PC-9 (cell line): ENCODE measurements at regions of chr16 and their contacts with region 1.

Region 1: GRCh38 chr16:67428146-67428731 is 2.7 kb upstream of the HSD11B2 start:
- DNase-seq: peak; percentile 59 to 74
- H3K4me3 ChIP-seq: no peak overlapping the region
- H3K27ac ChIP-seq: no peak overlapping the region
- H3K4me1 ChIP-seq: no peaks in the 10 kb centered on the region; the same call in none of the 2 replicates
- H3K27me3 ChIP-seq: no peaks in the 10 kb centered on the region
- CTCF ChIP-seq: peak; percentile 79

Region 2: GRCh38 chr16:66970775-66971725 is 457.2 kb before region 1 on chr16:
- CTCF ChIA-PET with region 1: no interaction called
- POLR2A ChIA-PET with region 1: interaction called, 10 read pairs
- intact Hi-C with region 1: no loop called
- DNase-seq: peak; percentile 63 to 67
- H3K4me3 ChIP-seq: no peak overlapping the region
- H3K27ac ChIP-seq: no peak overlapping the region
- H3K4me1 ChIP-seq: peaks cover 17% of the 10 kb centered on the region
- H3K27me3 ChIP-seq: no peaks in the 10 kb centered on the region
- CTCF ChIP-seq: no peak

Region 3: GRCh38 chr16:67137605-67138004 is 290.6 kb before region 1 on chr16:
- CTCF ChIA-PET with region 1: no interaction called
- POLR2A ChIA-PET with region 1: no interaction called
- intact Hi-C with region 1: no loop called
- DNase-seq: no peak
- H3K4me3 ChIP-seq: no peak overlapping the region
- H3K27ac ChIP-seq: no peak overlapping the region
- H3K4me1 ChIP-seq: no peaks in the 10 kb centered on the region
- H3K27me3 ChIP-seq: no peaks in the 10 kb centered on the region
- CTCF ChIP-seq: no peak

Region 4: DNA sequence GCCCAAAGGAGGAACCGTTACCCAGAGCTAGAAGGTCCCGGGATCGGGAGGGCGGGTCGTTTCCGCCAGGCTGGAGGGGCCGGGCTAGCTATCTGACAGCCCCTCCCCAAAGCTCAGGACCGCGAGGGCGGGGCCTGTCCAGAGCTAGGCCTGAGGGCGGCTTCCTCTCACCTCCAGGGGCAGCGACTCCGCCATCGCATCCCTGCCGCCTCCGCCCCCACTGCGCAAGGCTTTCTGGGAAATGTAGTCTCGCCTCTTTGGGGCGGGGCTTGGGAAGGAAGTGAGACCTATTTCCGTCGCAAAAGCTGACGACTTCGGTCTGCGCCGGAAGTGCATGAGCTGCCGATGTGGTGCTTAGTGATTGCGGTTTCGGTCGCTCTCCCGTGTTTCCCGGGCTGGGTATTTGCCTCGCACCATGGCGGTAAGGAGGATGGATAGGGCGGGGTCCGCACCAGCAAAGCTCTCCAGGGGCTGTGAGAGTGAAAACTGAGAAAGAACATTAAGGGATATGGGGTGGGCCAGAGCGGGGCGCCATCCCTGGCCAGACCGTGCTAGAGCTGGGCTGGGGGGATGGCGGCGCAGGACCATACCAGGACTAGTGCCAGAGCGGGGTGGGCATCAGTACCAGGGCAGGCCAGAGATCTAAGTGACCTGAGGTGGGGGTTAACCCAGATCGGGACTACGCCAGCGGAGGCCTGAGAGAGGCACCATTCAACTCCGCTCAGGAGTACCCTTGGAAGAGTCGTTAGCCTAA is 201.3 kb before region 1 on chr16 and contains the start of gene TMEM208:
- CTCF ChIA-PET with region 1: interaction called, 29 read pairs
- POLR2A ChIA-PET with region 1: no interaction called
- intact Hi-C with region 1: no loop called
- DNase-seq: peak; percentile 93 to 98
- H3K4me3 ChIP-seq: peak within 1 kb of the TSS; percentile 91
- H3K27ac ChIP-seq: peak within 1 kb of the TSS; percentile 20; the same call in 1 of the 2 replicates
- H3K4me1 ChIP-seq: peaks cover 15% of the 10 kb centered on the region
- H3K27me3 ChIP-seq: no peaks in the 10 kb centered on the region
- CTCF ChIP-seq: no peak; the same call in 1 of the 2 replicates
- total RNA-seq, gene TMEM208: 39.5 and 42.0 TPM in 2 replicates

Region 5: DNA sequence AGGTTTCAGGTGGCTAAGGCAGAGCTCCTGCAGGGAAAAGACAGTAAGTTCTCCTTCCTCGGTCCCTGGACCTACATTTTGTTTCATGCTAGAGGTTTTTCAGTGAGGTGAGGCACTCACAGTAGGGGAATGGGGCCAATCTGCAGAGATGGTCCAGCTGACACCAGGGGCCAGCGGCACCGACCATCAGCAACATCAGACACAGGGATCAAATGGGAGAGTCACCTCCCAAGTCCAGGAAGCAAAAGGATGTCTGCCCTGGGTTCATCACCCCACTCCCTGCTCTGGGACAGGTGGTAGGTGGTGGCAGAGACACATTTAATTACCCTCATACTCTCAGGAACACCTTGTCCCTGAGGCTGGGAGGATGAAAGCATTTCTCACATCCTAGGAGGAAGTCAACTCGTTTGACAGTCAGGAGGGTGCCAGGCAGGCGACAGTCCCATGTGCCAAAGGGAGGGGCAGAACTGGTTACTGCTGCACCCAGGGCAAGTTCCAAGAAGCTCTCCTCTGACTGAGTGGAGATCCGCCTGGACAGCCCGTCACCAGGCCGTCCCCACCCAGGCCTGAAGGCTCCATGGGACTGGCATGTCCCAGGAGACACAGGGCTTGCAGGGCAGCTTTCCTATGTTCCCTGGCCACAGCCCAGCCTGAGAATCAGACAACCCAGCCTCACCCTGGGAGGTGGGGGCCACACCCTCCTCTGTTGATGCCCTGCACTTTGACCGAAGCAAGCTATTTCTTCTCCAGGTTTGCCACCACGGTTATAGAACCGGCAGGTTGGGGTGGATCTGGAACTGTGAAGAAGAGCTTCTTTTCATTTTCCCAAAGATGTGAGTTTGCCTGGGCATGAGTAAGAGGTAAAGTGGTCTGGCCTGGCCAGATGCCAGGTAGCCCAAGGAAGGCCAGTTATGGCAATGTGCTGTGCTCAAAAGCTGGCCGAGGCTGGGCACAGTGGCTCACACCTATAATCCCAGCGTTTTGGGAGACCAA is 33.7 kb after region 1 on chr16:
- CTCF ChIA-PET with region 1: interaction called, 13 read pairs
- POLR2A ChIA-PET with region 1: no interaction called
- intact Hi-C with region 1: loop called (anchors 1 kb)
- DNase-seq: peak in 1 of 2 experiments; percentile 72
- H3K4me3 ChIP-seq: no peak overlapping the region
- H3K27ac ChIP-seq: no peak overlapping the region
- H3K4me1 ChIP-seq: 0 out of 2 replicates have a peak, but pooled peaks cover 5% of the 10 kb centered on the region
- H3K27me3 ChIP-seq: no peaks in the 10 kb centered on the region
- CTCF ChIP-seq: no peak

Region 6: DNA sequence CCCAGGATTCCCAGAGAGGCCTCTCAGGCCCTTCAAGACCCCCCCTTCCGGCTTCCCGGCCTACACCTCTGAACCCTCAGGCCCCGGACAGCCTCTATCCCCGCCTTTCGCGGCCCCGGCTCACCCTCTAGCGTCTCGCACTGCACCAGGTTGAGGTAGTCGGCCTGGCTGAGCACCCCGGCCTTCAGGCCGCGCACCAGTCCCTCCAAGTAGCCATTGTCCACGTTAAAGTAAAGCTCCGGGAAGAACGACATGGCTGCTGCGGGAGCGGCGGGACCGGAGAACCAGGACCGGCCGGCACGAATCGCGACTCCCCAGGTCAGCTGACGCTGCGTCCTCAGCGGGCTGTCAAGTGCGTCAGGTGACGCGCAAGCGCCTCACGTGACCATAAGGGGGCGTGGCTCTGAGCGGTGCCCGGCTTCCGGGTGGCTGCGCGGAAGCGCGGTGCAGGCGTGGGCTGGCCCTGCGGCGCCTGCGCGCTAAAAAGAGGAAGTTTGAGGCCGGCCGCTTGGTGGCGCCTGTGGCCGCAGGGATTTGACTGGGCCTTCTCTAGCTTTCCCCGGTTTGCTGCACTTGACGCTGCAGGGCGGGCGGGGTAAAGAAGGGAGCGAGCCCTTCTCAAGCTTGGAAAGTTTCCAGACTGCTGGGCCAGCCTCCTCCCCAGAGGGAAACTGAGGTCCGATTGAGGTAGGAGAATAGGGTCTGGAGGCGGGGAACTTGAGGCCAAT is 52.8 kb after region 1 on chr16 and contains the start of gene ATP6V0D1:
- CTCF ChIA-PET with region 1: interaction called, 8 read pairs
- POLR2A ChIA-PET with region 1: interaction called, 31 read pairs
- intact Hi-C with region 1: no loop called
- DNase-seq: peak; percentile 92 to 98
- H3K4me3 ChIP-seq: peak within 1 kb of the TSS; percentile 71
- H3K27ac ChIP-seq: peak within 1 kb of the TSS; percentile 31
- H3K4me1 ChIP-seq: peaks cover 14% of the 10 kb centered on the region
- H3K27me3 ChIP-seq: no peaks in the 10 kb centered on the region
- CTCF ChIP-seq: peak; percentile 81
- total RNA-seq, gene ATP6V0D1: 51.5 and 61.0 TPM in 2 replicates